Heart left ventricle (tissue), 16 donors: ENCODE measurements at regions of chr18 and their contacts with region 1.

Region 1: GRCh38 chr18:54162431-54162830 is 62.0 kb downstream of the MBD2 start:
- DNase-seq: no peak
- ATAC-seq: no peak
- H3K4me3 ChIP-seq: no peak overlapping the region
- H3K27ac ChIP-seq: no peak overlapping the region
- H3K4me1 ChIP-seq: peaks cover 0 to 7% (median 0%) of the 10 kb centered on the region in 12 donors
- H3K27me3 ChIP-seq: no peaks in the 10 kb centered on the region
- CTCF ChIP-seq: no peak
- POLR2A ChIP-seq: no peak

Region 2: DNA sequence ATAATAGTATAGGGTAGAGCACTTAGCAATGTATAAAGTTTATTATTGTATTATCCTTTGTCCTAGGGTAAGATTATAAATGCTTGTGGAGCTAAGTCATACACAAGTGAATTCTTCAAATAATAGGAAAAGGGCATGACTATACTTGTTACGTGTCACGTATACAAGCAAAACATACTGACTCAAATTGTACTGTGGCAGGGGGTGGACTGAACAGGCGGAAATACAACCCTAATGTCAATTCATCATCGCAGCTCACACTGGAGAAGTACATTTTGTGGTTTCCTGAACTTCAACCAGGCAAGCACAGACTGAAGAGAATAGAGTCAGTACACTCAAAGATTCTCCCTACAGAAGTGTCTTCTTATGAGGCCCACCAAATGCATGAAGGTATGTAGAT is 139.0 kb before region 1 on chr18:
- intact Hi-C with region 1: no loop called
- DNase-seq: no peak
- ATAC-seq: no peak
- H3K4me3 ChIP-seq: no peak overlapping the region
- H3K27ac ChIP-seq: no peak overlapping the region
- H3K4me1 ChIP-seq: no peaks in the 10 kb centered on the region
- H3K27me3 ChIP-seq: no peaks in the 10 kb centered on the region
- CTCF ChIP-seq: no peak
- POLR2A ChIP-seq: no peak

Region 3: DNA sequence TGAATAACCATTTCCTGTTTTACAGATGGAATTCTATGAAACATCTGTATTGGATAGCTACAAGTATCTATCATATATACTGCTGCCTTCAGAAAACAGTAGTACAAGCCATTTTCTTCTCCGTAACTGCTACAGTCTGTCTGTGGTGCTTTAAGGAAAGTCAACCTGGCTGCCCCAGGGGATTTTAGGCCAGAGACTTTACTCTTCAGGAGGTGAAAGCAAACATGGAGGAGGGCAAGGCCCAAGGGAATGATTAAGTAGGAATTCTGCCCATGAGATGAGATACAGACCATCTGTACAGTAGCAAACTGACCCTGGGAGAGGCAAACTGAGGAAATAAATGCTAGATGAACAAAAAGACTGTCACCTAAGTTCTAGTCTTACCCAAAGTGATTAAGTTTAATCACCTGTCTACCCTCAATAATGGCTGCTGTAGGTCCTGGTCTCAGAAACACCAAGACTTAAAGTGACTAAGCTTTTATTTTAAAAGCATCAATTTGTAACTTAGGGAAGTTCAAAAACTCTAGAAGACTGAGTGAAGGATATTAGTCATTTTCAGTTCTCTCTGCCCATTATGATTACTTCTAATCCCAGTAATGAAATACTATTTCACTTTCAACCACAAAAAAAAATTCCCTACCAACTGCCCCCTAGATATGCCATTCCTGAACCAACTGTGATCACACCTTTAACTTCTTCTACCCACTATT is 47.2 kb after region 1 on chr18:
- intact Hi-C with region 1: loop called in 1 of 10 experiments (anchors 10 kb)
- DNase-seq: no peak
- ATAC-seq: no peak
- H3K4me3 ChIP-seq: no peak overlapping the region
- H3K27ac ChIP-seq: peak overlapping the region in 1 of 12 donors; percentile 50
- H3K4me1 ChIP-seq: peaks cover 0 to 41% (median 25%) of the 10 kb centered on the region in 12 donors
- H3K27me3 ChIP-seq: no peaks in the 10 kb centered on the region
- CTCF ChIP-seq: no peak
- POLR2A ChIP-seq: no peak

Region 4: GRCh38 chr18:54532217-54532616 is 369.8 kb after region 1 on chr18:
- intact Hi-C with region 1: no loop called
- DNase-seq: no peak
- ATAC-seq: no peak
- H3K4me3 ChIP-seq: no peak overlapping the region
- H3K27ac ChIP-seq: no peak overlapping the region
- H3K4me1 ChIP-seq: no peaks in the 10 kb centered on the region
- H3K27me3 ChIP-seq: peaks cover 0 to 7% (median 0%) of the 10 kb centered on the region in 9 donors
- CTCF ChIP-seq: no peak
- POLR2A ChIP-seq: no peak